ENCODE measurements at regions of chr15 and their contacts with region 1.

Region 1: DNA sequence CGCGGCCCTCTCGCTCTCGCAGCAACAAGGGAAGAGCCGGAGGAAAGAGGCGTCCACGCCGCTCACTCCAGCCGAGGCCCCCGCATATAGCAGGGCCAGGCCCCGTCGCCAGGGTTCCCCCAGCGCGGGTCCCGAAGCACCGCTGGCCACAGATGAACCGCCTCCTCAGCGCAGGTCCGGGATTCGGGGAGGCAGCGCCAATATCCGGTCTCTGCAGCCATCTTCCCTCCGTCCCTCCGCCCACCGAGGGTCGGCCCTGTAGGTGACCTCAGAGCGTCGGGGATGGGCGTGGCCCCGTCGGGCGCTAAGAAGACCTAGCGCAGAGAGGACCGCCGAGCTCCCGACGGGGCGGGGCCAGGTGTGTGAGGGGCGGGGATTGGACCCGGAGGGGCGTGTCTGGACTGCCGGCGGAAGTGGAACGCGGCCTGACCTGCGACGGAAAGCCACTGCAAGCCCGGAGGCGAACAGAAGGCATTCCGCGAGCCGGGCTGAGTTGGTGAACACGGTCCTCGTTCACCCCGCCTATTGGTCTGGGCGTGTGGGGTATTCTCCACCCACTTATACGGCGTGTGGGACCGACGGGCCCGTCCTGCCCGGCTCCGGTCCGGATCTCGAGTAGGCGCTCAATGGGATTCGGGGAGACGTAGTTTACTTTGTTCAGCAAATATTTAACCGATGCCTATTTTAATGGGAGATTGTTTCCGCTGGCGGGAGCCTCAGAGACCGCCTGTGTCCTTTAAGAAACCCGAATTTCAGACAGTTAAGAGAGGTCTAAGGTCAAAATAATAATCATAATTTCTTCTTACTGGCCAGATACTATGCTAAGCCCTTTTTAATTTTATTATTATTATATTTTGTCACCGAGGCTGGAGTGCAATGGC is 26.9 kb upstream of the MTHFS start:
- DNase-seq: peak; percentile 97
- H3K4me3 ChIP-seq: peak overlapping the region; percentile 92 to 99 (median 95)
- H3K27ac ChIP-seq: peak overlapping the region; percentile 78
- H3K4me1 ChIP-seq: no peaks in the 10 kb centered on the region
- H3K27me3 ChIP-seq: no peaks in the 10 kb centered on the region
- CTCF ChIP-seq: no peak

Region 2: GRCh38 chr15:79970624-79971434 is 47.1 kb after region 1 on chr15 and contains the start of gene BCL2A1:
- CTCF ChIA-PET with region 1: no interaction called
- dilution Hi-C with region 1: no loop called
- in situ Hi-C with region 1: no loop called
- intact Hi-C with region 1: loop called (anchors 1 kb)
- DNase-seq: peak; percentile 96
- H3K4me3 ChIP-seq: no peak within 1 kb of the TSS
- H3K27ac ChIP-seq: no peak within 1 kb of the TSS
- H3K4me1 ChIP-seq: no peaks in the 10 kb centered on the region
- H3K27me3 ChIP-seq: no peaks in the 10 kb centered on the region
- CTCF ChIP-seq: no peak
- total RNA-seq, gene BCL2A1: 0.78 TPM in 1 of 2 donors, not detected in the other

Measured in mammary epithelial cell (primary cell).